ENCODE measurements at regions of chr14 and their contacts with region 1.

Region 1: DNA sequence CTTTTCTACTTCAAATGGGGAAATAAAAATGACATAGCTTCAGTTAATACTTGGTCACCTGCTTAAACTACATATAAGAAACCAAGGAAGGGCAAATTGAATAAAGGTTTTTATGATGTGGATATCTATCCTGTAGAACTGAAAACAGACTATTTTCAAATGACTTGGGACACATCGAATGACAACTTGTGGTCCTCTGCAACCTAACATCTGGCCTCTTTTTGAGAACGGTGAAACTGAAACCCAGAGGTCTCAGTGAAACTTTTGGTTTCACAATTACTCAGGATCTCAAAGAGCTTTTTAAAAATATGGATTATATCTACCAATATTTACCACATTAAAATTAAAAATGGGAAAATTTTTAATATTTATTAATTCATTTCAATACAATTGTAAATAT is 65.2 kb downstream of the PPP2R5E start:
- DNase-seq: peak; percentile 79
- ATAC-seq: peak; percentile 88
- H3K4me3 ChIP-seq: 0 out of 2 replicates have a peak overlapping the region, but pooled peaks have one; percentile 28
- H3K27ac ChIP-seq: peak overlapping the region; percentile 81
- H3K4me1 ChIP-seq: peaks cover 29% of the 10 kb centered on the region
- H3K27me3 ChIP-seq: no peaks in the 10 kb centered on the region
- CTCF ChIP-seq: no peak
- EP300 ChIP-seq: peak in 1 of 2 experiments; percentile 81; a peak in 2 of 4 replicates
- POLR2A ChIP-seq: no peak
- RAD21 ChIP-seq: no peak

Region 2: DNA sequence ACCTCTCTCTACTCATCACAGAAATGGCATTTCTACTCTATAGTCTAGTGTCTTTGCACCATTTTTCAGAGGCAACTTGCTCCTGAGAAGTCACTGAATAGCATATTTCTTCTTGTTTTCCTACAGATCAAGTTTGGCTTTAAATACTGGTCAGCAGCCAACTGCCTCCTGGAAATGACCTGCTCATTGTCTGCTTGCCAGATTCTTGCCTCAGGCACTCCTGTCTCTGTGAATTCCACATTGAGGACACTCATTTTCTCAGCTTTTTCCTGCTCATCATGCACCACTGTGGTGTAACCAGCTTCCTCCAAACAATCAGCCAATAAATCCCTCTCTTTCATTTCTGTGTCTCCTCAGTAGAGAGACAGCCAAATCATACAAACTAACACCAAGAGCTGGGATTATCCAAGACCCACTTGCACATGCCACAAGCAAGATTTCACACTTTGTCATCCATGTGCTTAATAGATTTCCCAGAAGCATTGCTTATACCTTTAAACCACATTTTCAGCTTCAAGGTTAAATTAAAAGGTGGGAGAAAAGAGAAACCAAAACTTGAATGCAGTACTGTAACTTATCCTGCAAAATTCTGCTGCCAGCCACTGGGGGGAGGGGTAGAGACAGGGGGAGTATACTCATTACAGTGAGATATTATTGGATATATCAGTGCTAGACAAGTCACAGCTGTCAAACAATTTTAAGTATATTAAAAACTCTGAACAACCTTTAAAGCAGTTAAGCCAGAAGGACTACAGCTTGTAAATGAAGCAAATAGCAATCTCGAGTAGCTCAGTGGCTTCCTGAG is 39.9 kb before region 1 on chr14:
- CTCF ChIA-PET with region 1: interaction called, 6 read pairs
- POLR2A ChIA-PET with region 1: interaction called, 3 read pairs
- RAD21 ChIA-PET with region 1: interaction called, 4 read pairs
- SMC1A ChIA-PET with region 1: interaction called, 12 read pairs
- in situ Hi-C with region 1: no loop called
- intact Hi-C with region 1: no loop called
- DNase-seq: no peak
- ATAC-seq: peak; percentile 82
- H3K4me3 ChIP-seq: no peak overlapping the region
- H3K27ac ChIP-seq: peak overlapping the region; percentile 45
- H3K4me1 ChIP-seq: peaks cover 8% of the 10 kb centered on the region
- H3K27me3 ChIP-seq: no peaks in the 10 kb centered on the region
- CTCF ChIP-seq: peak; percentile 14 to 41 (median 32); a peak in 3 of 6 replicates
- EP300 ChIP-seq: no peak
- POLR2A ChIP-seq: no peak
- RAD21 ChIP-seq: peak; percentile 36; the same call in 1 of the 2 replicates

Region 3: DNA sequence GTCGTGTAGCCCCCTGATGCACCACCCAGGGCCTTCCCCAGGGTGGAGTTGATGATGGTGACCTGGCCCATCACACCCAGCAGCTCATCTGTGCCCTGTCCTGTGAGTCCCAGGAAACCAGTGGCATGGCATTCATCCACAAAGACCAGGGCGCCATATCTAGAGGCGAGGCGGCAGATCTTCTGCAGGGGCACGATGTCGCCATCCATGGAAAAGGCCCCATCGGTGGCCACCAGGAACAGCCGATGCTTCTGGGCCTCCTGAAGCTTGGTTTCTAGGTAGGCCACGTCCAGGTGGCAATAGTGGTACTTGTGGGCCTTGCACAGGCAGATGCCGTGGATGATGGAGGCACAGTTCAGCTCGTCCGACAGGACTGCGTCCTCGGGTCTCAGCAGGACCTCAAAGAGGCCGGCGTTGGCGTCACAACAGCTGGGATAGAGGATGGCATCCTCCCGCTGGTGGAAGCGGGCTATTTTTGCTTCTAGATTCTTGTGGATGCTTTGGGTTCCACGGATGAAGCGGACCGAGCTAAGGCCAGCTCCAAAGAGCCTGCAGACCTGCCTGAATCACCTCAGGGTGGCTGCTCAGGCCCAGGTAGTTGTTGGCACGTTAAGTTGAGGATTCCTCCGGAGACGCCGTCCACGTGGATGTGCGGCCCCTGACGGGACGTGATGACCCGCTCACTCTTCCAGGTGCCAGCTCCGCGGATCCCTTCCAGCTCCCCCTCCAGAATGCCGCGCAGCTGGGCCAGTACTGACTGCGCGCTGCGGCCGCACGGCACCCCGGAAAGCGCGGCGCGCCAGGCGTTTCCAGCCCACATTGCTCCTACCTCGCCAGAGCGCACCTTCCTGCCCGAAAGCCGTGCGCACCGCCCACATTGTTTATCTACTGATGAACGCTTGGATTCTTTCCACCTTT is 116.7 kb after region 1 on chr14:
- CTCF ChIA-PET with region 1: no interaction called
- POLR2A ChIA-PET with region 1: no interaction called
- RAD21 ChIA-PET with region 1: no interaction called
- SMC1A ChIA-PET with region 1: no interaction called
- in situ Hi-C with region 1: no loop called
- intact Hi-C with region 1: no loop called
- DNase-seq: no peak
- ATAC-seq: no peak
- H3K4me3 ChIP-seq: no peak overlapping the region
- H3K27ac ChIP-seq: no peak overlapping the region
- H3K4me1 ChIP-seq: peaks cover 15% of the 10 kb centered on the region
- H3K27me3 ChIP-seq: no peaks in the 10 kb centered on the region
- CTCF ChIP-seq: no peak
- EP300 ChIP-seq: no peak
- POLR2A ChIP-seq: no peak
- RAD21 ChIP-seq: no peak

Measured in GM12878 (cell line).